ENCODE measurements at regions of chrX and their contacts with region 1.

Region 1: GRCh38 chrX:135421537-135421931 is 210 bp upstream of the SMIM10L2A start:
- H3K4me3 Mint-ChIP-seq: peak overlapping the region; percentile 51
- H3K27ac Mint-ChIP-seq: no peak overlapping the region
- H3K4me1 Mint-ChIP-seq: peaks cover 16% of the 10 kb centered on the region
- H3K27me3 Mint-ChIP-seq: peaks cover 48% of the 10 kb centered on the region

Region 2: DNA sequence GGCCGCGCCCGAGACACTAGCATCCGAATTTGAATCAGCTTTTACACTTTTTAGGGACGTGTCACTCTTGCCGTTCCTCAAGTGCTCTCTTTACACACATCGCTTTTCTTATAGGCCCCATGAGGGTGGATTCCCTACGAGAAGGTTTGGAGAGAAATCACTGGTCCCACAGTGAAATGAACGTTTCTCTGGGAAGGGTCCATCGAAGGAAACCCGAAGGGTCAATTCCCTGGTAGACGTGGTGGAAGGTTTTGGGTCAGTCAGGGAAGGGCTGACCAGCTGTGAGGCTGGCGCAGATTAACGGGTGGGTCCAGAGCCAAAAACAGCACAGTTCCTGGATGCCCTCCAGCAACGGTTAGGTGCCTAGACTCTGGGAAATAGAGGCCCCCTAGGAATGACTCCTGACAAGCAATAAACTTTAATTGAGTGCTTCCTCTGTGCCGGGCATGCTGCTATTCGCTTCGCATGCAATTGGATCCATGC is 76.4 kb before region 1 on chrX:
- intact Hi-C with region 1: loop called (anchors 5 kb)
- H3K4me3 Mint-ChIP-seq: peak overlapping the region; percentile 86
- H3K27ac Mint-ChIP-seq: peak overlapping the region; percentile 98
- H3K4me1 Mint-ChIP-seq: peaks cover 47% of the 10 kb centered on the region
- H3K27me3 Mint-ChIP-seq: no peaks in the 10 kb centered on the region

Measured in dendritic cell treated with granulocyte-macrophage colony-stimulating factor and Interleukin-4, amounts not matched to agents 40 ng/mL and 50 ng/mL, for 4 days (primary cell).